Dorsolateral prefrontal cortex (tissue), 120 donors: ENCODE measurements at regions of chr7 and their contacts with region 1.

Region 1: DNA sequence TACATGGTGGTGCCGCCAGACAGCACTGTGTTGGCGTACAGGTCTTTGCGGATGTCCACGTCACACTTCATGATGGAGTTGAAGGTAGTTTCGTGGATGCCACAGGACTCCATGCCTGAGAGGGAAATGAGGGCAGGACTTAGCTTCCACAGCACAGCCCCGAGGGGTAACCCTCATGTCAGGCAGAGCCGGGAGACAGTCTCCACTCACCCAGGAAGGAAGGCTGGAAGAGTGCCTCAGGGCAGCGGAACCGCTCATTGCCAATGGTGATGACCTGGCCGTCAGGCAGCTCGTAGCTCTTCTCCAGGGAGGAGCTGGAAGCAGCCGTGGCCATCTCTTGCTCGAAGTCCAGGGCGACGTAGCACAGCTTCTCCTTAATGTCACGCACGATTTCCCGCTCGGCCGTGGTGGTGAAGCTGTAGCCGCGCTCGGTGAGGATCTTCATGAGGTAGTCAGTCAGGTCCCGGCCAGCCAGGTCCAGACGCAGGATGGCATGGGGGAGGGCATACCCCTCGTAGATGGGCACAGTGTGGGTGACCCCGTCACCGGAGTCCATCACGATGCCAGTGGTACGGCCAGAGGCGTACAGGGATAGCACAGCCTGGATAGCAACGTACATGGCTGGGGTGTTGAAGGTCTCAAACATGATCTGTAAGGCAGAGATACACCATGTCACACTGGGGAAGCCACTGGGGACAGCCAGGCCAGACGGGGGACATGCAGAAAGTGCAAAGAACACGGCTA is 104.6 kb upstream of the TNRC18 start:
- DNase-seq: peak in 3 of 10 donors; percentile 30 to 39 (median 33)
- H3K4me3 ChIP-seq: peak overlapping the region; percentile 67 to 99 (median 92)
- H3K27ac ChIP-seq: peak overlapping the region; percentile 43 to 100 (median 100)
- H3K27me3 ChIP-seq: no peaks in the 10 kb centered on the region
- CTCF ChIP-seq: no peak

Region 2: GRCh38 chr7:5514440-5515035 is 13.7 kb before region 1 on chr7:
- intact Hi-C with region 1: loop called in 1 of 2 experiments (anchors 1 kb)
- DNase-seq: no peak
- H3K4me3 ChIP-seq: peak overlapping the region; percentile 69 to 99 (median 92)
- H3K27ac ChIP-seq: peak overlapping the region; percentile 88 to 100 (median 99)
- H3K27me3 ChIP-seq: no peaks in the 10 kb centered on the region
- CTCF ChIP-seq: no peak

Region 3: DNA sequence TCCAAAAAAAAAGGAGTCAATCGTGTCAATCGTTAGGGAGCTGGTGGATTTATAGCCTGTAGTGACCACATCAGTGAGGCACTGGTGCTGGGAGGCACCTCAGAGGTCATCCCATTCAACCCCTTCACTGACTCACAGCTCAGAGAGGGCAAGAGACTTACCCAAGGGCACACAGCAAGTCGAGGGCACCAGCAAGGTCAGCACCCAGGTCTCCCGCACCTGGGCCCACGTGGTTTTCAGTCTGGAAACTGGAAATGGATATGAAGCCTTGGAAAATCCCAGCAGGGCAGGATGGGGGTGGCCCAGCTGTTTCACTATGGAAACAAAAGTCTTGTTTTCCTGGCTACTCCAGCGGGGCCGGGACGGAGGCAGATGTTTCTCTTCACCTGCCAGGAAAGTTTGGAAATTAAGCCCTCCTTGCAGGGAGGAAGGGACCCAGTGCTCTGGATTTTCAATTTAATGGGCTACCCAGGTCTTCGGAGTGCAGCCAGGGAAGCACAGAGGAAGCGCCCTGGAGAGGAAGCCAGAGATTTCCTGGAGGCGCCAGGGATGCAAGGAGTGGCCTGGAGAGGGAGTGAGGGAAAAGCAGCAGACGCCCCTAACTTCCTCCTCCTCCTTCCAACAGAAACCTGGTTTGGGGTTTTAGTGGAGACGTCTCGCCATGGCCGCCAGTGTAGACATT is 52.6 kb after region 1 on chr7:
- intact Hi-C with region 1: no loop called
- DNase-seq: no peak
- H3K4me3 ChIP-seq: no peak overlapping the region
- H3K27ac ChIP-seq: no peak overlapping the region
- H3K27me3 ChIP-seq: no peaks in the 10 kb centered on the region
- CTCF ChIP-seq: no peak